GM12878 (cell line): ENCODE measurements at regions of chr12 and their contacts with region 1.

Region 1: DNA sequence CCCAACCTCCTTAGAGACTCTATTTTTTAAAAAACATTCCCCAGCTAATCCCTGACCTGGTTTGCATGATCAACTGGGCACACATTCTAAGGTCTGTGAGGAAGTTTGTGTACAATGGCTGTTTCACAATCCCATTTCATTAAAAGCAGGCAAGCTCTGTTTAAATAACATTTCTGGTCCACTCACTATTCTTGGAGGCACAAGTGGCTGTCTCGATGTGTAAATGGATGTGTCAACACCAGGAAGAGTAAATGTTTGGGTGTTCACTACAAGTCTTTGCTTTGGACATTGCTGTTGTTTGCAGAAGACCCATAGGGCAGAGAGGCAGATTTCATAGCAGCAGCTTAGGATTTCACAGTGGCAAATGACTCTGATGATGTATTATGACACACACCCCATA is 98.3 kb downstream of the PDZRN4 start:
- DNase-seq: no peak
- ATAC-seq: no peak
- H3K4me3 ChIP-seq: no peak overlapping the region
- H3K27ac ChIP-seq: no peak overlapping the region
- H3K4me1 ChIP-seq: no peaks in the 10 kb centered on the region
- H3K27me3 ChIP-seq: no peaks in the 10 kb centered on the region
- CTCF ChIP-seq: no peak
- EP300 ChIP-seq: no peak
- POLR2A ChIP-seq: no peak
- RAD21 ChIP-seq: no peak

Region 2: DNA sequence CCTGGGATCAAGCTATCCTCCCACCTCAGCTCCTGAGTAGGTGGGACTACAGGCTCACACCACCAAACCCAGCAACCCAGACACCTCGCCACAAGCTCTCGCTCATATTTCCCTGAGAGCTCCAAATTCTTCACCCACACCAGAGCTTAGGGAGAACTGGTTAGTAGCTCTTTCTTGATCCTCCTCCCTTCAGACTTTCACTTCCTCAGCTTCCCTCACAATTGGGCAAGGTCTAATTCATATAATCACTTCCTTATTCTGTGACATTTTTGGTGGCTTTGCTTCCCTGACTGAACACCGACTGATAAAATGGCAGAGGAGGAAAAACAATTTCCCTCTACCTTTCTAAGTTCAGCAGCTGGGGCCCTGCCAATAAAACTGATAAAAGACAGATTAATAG is 769.7 kb after region 1 on chr12:
- CTCF ChIA-PET with region 1: no interaction called
- POLR2A ChIA-PET with region 1: interaction called, 11 read pairs
- RAD21 ChIA-PET with region 1: no interaction called
- SMC1A ChIA-PET with region 1: no interaction called
- in situ Hi-C with region 1: no loop called
- intact Hi-C with region 1: no loop called
- DNase-seq: peak; percentile 20
- ATAC-seq: peak; percentile 85
- H3K4me3 ChIP-seq: no peak overlapping the region
- H3K27ac ChIP-seq: no peak overlapping the region
- H3K4me1 ChIP-seq: no peaks in the 10 kb centered on the region; the same call in 1 of the 2 replicates
- H3K27me3 ChIP-seq: no peaks in the 10 kb centered on the region
- CTCF ChIP-seq: no peak
- EP300 ChIP-seq: no peak
- POLR2A ChIP-seq: no peak
- RAD21 ChIP-seq: no peak